B cell (primary cell): ENCODE measurements at regions of chr1 and their contacts with region 1.

Region 1: DNA sequence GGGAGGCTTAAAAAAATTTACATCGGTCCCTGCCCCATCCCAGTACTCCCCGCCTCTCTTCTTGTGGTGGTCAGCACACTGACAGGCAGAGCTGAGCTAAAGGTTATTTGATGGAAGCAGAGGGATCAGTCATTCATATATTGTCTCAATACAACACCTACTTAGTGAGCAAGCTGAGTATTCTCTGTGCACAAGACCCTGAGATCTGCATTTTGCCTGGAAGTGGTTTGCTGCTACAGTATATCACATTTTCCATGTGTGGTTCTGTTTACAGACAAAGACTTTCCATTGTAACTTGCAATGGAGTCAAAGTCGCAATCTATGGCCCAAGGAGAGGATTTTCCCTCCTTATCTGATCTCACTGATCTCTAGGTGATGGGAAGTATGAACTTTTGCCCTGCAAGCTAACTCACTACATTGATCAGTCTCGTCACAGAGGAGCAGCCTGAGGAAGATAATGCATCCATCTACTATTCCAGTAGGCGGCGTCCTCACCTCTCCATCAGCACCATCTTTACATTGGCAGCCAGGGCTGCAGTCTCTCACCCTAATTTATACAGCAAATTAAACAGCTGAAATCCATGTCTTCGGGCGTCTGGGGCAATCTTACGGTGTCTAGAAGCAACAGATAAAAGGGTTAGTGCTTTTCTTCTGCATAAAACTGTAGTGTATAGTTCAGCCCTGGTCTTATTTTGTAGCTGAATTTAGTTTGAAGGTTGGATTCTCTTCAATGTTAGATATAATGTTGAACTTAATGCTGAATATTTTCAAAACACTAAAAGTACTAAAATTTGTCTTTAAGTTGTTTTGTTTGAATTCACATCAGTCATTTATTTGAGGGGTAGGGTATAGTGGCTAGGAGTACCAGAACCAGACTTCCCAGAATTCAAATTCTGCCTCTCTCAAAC is 3.2 kb upstream of the TRAF5 start:
- DNase-seq: peak; percentile 81
- ATAC-seq: peak; percentile 56
- H3K4me3 ChIP-seq: no peak overlapping the region
- H3K4me3 Mint-ChIP-seq: no peak overlapping the region
- H3K27ac ChIP-seq: no peak overlapping the region
- H3K27ac Mint-ChIP-seq: no peak overlapping the region
- H3K4me1 ChIP-seq: peaks cover 28 to 34% of the 10 kb centered on the region in 2 donors
- H3K4me1 Mint-ChIP-seq: peaks cover 39% of the 10 kb centered on the region
- H3K27me3 ChIP-seq: no peaks in the 10 kb centered on the region
- H3K27me3 Mint-ChIP-seq: no peaks in the 10 kb centered on the region
- CTCF ChIP-seq: peak; percentile 94

Region 2: DNA sequence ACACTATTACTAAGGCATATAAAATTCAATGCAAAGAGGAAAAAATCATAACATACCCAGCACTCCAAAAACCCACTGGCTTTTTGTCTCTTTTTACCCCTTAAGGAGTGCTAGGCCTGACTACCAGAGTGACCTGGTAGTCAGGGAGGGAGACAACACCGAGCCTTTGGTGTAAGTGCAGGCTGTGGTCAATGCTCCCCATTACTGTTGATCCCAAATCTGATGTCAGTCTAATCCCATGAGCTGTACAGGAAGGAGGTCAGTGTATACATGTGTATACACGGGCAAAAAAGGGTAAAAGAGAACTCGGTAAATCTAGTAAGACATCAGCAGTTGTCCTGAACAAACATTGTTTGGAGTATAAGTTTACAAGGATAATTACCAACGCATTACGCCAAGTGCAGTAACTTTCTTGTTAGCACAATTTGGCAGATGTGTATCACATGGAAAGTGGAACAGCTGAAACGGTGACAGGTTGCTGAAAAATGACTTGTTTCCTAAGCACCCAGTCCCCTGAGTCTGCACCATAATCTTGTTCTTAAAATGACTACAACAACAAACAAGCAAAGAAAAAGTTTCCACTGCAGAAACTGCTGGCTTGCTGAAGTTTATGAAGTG is 407.4 kb before region 1 on chr1:
- CTCF ChIA-PET with region 1: no interaction called
- POLR2A ChIA-PET with region 1: no interaction called
- intact Hi-C with region 1: no loop called
- DNase-seq: no peak
- ATAC-seq: no peak
- H3K4me3 ChIP-seq: no peak overlapping the region
- H3K4me3 Mint-ChIP-seq: no peak overlapping the region
- H3K27ac ChIP-seq: no peak overlapping the region
- H3K27ac Mint-ChIP-seq: no peak overlapping the region
- H3K4me1 ChIP-seq: no peaks in the 10 kb centered on the region
- H3K4me1 Mint-ChIP-seq: no peaks in the 10 kb centered on the region
- H3K27me3 ChIP-seq: peaks cover 0 to 3% (median 0%) of the 10 kb centered on the region in 4 experiments
- H3K27me3 Mint-ChIP-seq: peaks cover 27% of the 10 kb centered on the region
- CTCF ChIP-seq: no peak

Region 3: GRCh38 chr1:211258756-211259637 is 64.4 kb before region 1 on chr1 and contains the start of gene RCOR3:
- CTCF ChIA-PET with region 1: interaction called, 5 read pairs
- POLR2A ChIA-PET with region 1: interaction called, 3 read pairs
- intact Hi-C with region 1: loop called (anchors 2 kb)
- DNase-seq: peak; percentile 93
- ATAC-seq: peak; percentile 74
- H3K4me3 ChIP-seq: peak within 1 kb of the TSS; percentile 81 to 93 (median 90)
- H3K4me3 Mint-ChIP-seq: peak within 1 kb of the TSS; percentile 92
- H3K27ac ChIP-seq: peak within 1 kb of the TSS; percentile 88 to 90
- H3K27ac Mint-ChIP-seq: peak within 1 kb of the TSS; percentile 96
- H3K4me1 ChIP-seq: peaks cover 11 to 16% of the 10 kb centered on the region in 2 donors
- H3K4me1 Mint-ChIP-seq: peaks cover 15% of the 10 kb centered on the region
- H3K27me3 ChIP-seq: no peaks in the 10 kb centered on the region
- H3K27me3 Mint-ChIP-seq: no peaks in the 10 kb centered on the region
- CTCF ChIP-seq: peak; percentile 84
- total RNA-seq, gene RCOR3: 120 and 124 TPM in 2 replicates

Region 4: DNA sequence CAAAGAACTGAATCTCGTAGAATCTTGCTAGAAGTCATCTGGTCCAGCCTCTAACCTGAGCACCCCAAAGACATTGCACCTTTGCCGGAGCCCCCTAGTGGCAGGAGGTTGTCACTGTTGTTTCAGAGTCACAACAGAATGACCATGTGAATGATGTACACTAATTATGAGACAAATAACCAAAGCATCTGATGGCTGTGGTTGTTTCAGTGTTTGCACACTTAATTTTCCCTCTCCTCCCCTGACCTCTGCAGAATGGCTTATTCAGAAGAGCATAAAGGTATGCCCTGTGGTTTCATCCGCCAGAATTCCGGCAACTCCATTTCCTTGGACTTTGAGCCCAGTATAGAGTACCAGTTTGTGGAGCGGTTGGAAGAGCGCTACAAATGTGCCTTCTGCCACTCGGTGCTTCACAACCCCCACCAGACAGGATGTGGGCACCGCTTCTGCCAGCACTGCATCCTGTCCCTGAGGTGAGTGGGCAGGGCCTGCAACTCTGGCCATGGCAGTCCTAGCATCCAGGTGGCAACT is 29.6 kb after region 1 on chr1:
- CTCF ChIA-PET with region 1: interaction called, 333 read pairs
- POLR2A ChIA-PET with region 1: interaction called, 6 read pairs
- intact Hi-C with region 1: loop called (anchors 1 kb)
- DNase-seq: peak; percentile 74
- ATAC-seq: peak; percentile 82
- H3K4me3 ChIP-seq: peak overlapping the region in 2 of 5 experiments; percentile 28 to 55
- H3K4me3 Mint-ChIP-seq: peak overlapping the region; percentile 81
- H3K27ac ChIP-seq: peak overlapping the region; percentile 40 to 75
- H3K27ac Mint-ChIP-seq: peak overlapping the region; percentile 91
- H3K4me1 ChIP-seq: peaks cover 56 to 58% of the 10 kb centered on the region in 2 donors
- H3K4me1 Mint-ChIP-seq: peaks cover 67% of the 10 kb centered on the region
- H3K27me3 ChIP-seq: no peaks in the 10 kb centered on the region
- H3K27me3 Mint-ChIP-seq: no peaks in the 10 kb centered on the region
- CTCF ChIP-seq: peak; percentile 79

Region 5: DNA sequence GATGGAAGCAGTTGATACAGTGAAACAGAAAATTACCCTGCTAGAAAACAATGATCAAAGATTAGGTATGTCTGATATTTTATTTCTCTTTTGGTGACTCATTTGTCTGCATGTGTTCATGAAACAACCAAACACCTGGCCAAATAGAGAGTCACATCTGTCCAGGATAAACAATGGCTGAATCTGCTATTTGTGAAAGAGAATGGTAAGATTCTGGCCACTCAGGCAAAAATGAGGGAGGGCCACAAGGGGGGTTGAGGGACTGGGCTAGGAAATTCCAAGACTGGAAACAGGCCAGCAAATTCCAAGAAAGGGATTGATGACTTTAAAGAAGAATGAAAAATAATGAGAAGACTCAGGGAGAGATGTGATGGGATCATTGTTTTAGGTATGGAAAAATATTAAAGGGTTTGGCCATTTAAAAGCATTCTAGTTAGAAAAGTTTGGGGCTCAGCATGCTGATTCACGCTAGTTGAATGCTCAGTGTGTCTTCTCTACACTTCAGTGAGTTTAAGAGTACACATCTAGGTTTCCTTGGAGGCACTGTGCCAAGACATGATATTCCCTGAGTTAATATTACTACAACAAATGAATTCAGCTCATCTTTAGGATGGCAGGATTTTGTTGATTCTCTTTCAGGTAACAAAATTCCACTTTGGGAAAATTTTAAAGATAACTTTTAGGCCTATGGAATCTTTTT is 48.1 kb after region 1 on chr1:
- CTCF ChIA-PET with region 1: interaction called, 11 read pairs
- POLR2A ChIA-PET with region 1: no interaction called
- intact Hi-C with region 1: no loop called
- DNase-seq: no peak
- ATAC-seq: no peak
- H3K4me3 ChIP-seq: no peak overlapping the region
- H3K4me3 Mint-ChIP-seq: no peak overlapping the region
- H3K27ac ChIP-seq: no peak overlapping the region
- H3K27ac Mint-ChIP-seq: peak overlapping the region; percentile 5
- H3K4me1 ChIP-seq: no peaks in the 10 kb centered on the region
- H3K4me1 Mint-ChIP-seq: no peaks in the 10 kb centered on the region
- H3K27me3 ChIP-seq: no peaks in the 10 kb centered on the region
- H3K27me3 Mint-ChIP-seq: no peaks in the 10 kb centered on the region
- CTCF ChIP-seq: no peak

Region 6: DNA sequence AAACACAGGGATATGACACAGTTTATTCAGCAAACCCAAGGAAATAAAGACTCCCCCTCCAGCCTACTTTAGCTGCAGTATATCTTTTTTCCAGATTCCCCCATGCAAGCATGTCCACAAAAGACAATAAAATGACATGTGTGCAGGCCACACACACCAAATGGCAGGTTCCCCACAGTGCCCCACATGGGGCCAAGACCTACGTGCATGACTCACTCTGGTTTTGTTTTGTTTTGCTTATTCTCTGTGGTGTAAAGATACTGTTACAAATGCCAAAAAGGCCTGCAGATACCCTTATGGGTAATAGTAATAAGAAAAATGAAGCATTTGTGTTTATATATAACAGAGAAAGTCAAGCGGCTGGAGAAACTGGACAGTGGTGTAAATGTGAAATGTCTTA is 97.0 kb after region 1 on chr1:
- CTCF ChIA-PET with region 1: interaction called, 11 read pairs
- POLR2A ChIA-PET with region 1: interaction called, 5 read pairs
- intact Hi-C with region 1: no loop called
- DNase-seq: no peak
- ATAC-seq: no peak
- H3K4me3 ChIP-seq: no peak overlapping the region
- H3K4me3 Mint-ChIP-seq: no peak overlapping the region
- H3K27ac ChIP-seq: no peak overlapping the region
- H3K27ac Mint-ChIP-seq: no peak overlapping the region
- H3K4me1 ChIP-seq: no peaks in the 10 kb centered on the region
- H3K4me1 Mint-ChIP-seq: peaks cover 8% of the 10 kb centered on the region
- H3K27me3 ChIP-seq: no peaks in the 10 kb centered on the region
- H3K27me3 Mint-ChIP-seq: no peaks in the 10 kb centered on the region
- CTCF ChIP-seq: no peak

Region 7: GRCh38 chr1:211476200-211476849 is 152.9 kb after region 1 on chr1:
- CTCF ChIA-PET with region 1: interaction called, 118 read pairs
- POLR2A ChIA-PET with region 1: no interaction called
- intact Hi-C with region 1: loop called (anchors 1 kb)
- DNase-seq: peak; percentile 78
- ATAC-seq: peak; percentile 63
- H3K4me3 ChIP-seq: no peak overlapping the region
- H3K4me3 Mint-ChIP-seq: no peak overlapping the region
- H3K27ac ChIP-seq: no peak overlapping the region
- H3K27ac Mint-ChIP-seq: no peak overlapping the region
- H3K4me1 ChIP-seq: no peaks in the 10 kb centered on the region
- H3K4me1 Mint-ChIP-seq: peaks cover 2% of the 10 kb centered on the region
- H3K27me3 ChIP-seq: peaks cover 0 to 26% (median 1%) of the 10 kb centered on the region in 4 experiments
- H3K27me3 Mint-ChIP-seq: peaks cover 30% of the 10 kb centered on the region
- CTCF ChIP-seq: peak; percentile 96

Region 8: DNA sequence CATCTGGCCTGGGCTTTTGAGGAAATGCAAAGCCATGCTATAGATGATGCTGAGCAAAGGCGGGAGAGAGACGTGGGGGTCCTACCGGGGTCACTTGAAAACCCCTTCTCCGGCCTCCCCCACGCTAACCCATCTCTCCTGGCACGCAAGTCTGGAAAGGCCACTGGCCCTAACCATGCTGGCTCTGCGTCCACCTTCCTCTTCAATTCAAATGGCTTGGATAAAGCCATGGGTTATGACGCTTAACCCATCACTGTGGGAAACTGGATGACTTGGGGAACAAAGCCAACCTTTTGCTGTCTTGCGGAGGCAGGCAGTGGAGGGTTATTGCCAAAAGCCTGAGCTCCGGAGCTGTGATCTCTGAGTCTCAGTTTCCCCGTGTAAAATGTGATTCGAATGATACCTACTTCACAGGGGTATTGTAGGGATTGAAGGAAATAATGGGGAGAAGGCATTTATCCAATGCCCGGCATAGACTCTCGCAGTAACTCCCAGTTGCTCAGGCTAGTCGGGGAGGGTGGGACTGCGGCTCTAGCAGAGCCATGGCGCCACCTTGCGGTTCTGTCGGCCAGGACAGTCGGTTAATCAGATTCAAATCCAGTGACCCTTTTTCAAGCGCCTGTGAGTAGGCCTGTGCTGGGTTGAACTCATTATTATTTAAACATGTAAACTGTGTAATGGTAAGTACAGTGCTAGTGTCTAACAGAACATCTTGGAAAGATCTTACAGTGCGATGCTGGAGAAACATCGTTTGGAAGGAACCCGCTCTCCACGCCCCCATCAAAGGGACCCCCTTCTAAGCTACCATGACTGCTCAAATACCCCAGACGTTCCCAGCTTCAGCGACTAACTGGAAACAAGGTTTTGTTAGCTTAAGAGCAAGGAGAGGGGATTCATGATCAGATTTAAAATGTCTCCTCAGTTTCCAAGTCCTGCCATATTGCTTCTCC is 331.7 kb after region 1 on chr1:
- CTCF ChIA-PET with region 1: interaction called, 8 read pairs
- POLR2A ChIA-PET with region 1: no interaction called
- intact Hi-C with region 1: loop called (anchors 1 kb)
- DNase-seq: peak; percentile 85
- ATAC-seq: peak; percentile 91
- H3K4me3 ChIP-seq: no peak overlapping the region
- H3K4me3 Mint-ChIP-seq: no peak overlapping the region
- H3K27ac ChIP-seq: no peak overlapping the region
- H3K27ac Mint-ChIP-seq: no peak overlapping the region
- H3K4me1 ChIP-seq: peaks cover 0 to 7% of the 10 kb centered on the region in 2 donors
- H3K4me1 Mint-ChIP-seq: no peaks in the 10 kb centered on the region
- H3K27me3 ChIP-seq: peaks cover 0 to 6% (median 1%) of the 10 kb centered on the region in 4 experiments
- H3K27me3 Mint-ChIP-seq: peaks cover 9% of the 10 kb centered on the region
- CTCF ChIP-seq: peak; percentile 94